Transverse colon (tissue), 4 donors: ENCODE measurements at regions of chr10 and their contacts with region 1.

Region 1: DNA sequence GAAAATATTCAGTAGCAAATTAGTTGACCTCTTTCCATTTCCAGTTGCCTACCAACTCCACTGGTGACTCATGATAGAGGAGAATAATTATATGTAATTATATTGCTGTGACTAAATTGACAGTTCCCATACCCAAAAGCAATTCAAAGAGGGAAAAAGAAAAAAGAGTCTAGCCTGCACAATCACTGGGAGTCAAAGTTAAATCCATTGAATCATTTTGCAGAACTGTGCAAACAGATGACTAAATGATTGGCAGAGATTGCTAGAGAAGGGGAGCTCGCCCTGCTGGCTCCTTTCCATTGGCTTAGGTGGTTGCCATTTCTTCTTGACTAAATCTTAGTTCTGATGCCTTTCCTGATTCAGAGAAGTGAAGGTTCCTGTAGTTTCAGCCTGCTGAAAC is 1228.6 kb upstream of the SORCS1 start:
- DNase-seq: no peak
- H3K4me3 ChIP-seq: no peak overlapping the region
- H3K27ac ChIP-seq: no peak overlapping the region
- H3K4me1 ChIP-seq: no peaks in the 10 kb centered on the region
- H3K27me3 ChIP-seq: no peaks in the 10 kb centered on the region
- CTCF ChIP-seq: no peak
- EP300 ChIP-seq: no peak
- POLR2A ChIP-seq: no peak

Region 2: GRCh38 chr10:108039821-108040584 is 353.1 kb before region 1 on chr10:
- in situ Hi-C with region 1: no loop called
- intact Hi-C with region 1: loop called (anchors 5 kb)
- DNase-seq: no peak
- H3K4me3 ChIP-seq: no peak overlapping the region
- H3K27ac ChIP-seq: no peak overlapping the region
- H3K4me1 ChIP-seq: no peaks in the 10 kb centered on the region
- H3K27me3 ChIP-seq: no peaks in the 10 kb centered on the region
- CTCF ChIP-seq: no peak
- EP300 ChIP-seq: no peak
- POLR2A ChIP-seq: no peak